Activated naive CD4-positive, alpha-beta T cell treated with anti-CD3 and anti-CD28 coated beads for 36 hours (primary cell): ENCODE measurements at regions of chr7 and their contacts with region 1.

Region 1: GRCh38 chr7:157432957-157433576 is 96.3 kb downstream of the DNAJB6 start:
- DNase-seq: peak; percentile 78
- H3K4me3 Mint-ChIP-seq: peak overlapping the region; percentile 34
- H3K27ac Mint-ChIP-seq: no peak overlapping the region
- H3K4me1 Mint-ChIP-seq: peaks cover 14% of the 10 kb centered on the region
- H3K27me3 Mint-ChIP-seq: no peaks in the 10 kb centered on the region

Region 2: GRCh38 chr7:157474689-157475088 is 41.6 kb after region 1 on chr7:
- CTCF ChIA-PET with region 1: no interaction called
- intact Hi-C with region 1: loop called (anchors 1 kb)
- DNase-seq: no peak
- H3K4me3 Mint-ChIP-seq: no peak overlapping the region
- H3K27ac Mint-ChIP-seq: no peak overlapping the region
- H3K4me1 Mint-ChIP-seq: peaks cover 52% of the 10 kb centered on the region
- H3K27me3 Mint-ChIP-seq: no peaks in the 10 kb centered on the region

Region 3: GRCh38 chr7:157485361-157485831 is 52.3 kb after region 1 on chr7:
- CTCF ChIA-PET with region 1: no interaction called
- intact Hi-C with region 1: no loop called
- DNase-seq: no peak
- H3K4me3 Mint-ChIP-seq: no peak overlapping the region
- H3K27ac Mint-ChIP-seq: no peak overlapping the region
- H3K4me1 Mint-ChIP-seq: peaks cover 12% of the 10 kb centered on the region
- H3K27me3 Mint-ChIP-seq: no peaks in the 10 kb centered on the region

Region 4: GRCh38 chr7:157585113-157585861 is 152.2 kb after region 1 on chr7:
- CTCF ChIA-PET with region 1: interaction called, 3 read pairs
- intact Hi-C with region 1: loop called (anchors 10 kb)
- DNase-seq: peak; percentile 20
- H3K4me3 Mint-ChIP-seq: peak overlapping the region; percentile 76
- H3K27ac Mint-ChIP-seq: no peak overlapping the region
- H3K4me1 Mint-ChIP-seq: peaks cover 16% of the 10 kb centered on the region
- H3K27me3 Mint-ChIP-seq: peaks cover 7% of the 10 kb centered on the region

Region 5: DNA sequence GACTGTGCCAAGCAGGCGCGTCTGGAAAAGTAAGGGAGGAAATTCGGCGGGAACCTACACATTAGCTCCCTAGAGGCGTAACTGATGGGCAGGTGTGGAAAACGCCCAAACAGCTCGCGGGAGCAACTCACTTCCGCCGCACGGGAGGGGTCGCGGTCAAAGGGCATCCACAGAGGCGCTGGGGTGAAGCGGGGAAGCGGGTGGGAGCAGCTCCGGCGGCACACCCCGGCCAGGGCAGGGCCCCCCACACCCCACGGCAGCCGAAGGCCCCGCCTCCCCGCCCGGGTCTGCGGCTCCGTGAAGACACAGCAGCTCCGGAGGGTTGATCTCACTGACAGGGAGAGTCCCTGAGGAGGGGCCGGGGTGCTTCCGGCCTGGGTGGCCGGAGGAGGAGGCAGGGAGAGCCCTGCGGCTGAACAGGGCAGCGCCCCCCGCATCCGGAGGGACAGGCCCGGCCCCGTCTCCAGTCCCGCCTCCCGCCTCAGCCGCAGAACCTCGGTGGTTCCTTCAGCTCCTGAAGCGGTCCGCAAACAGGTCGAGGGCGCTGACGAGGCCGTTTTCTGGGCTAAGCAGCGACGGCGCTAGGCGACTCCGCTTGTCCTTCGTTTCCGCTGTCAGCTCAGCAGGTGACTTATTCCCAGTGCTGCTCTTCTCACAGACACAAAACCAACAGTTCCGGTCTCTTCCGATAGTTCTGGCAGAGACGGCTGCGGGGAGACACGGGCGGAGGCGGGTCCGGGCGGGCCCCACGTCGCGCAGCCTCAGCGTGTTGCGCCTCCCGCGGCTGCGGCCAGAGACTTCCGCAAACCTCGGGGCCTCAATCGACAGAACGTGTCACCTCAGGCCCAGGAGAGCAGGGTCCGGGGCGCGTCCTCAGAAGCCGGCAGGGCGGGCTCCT is 179.8 kb after region 1 on chr7:
- CTCF ChIA-PET with region 1: interaction called, 7 read pairs
- intact Hi-C with region 1: loop called (anchors 2 kb)
- DNase-seq: peak; percentile 77
- H3K4me3 Mint-ChIP-seq: peak overlapping the region; percentile 77
- H3K27ac Mint-ChIP-seq: peak overlapping the region; percentile 46
- H3K4me1 Mint-ChIP-seq: peaks cover 10% of the 10 kb centered on the region
- H3K27me3 Mint-ChIP-seq: no peaks in the 10 kb centered on the region

Region 6: DNA sequence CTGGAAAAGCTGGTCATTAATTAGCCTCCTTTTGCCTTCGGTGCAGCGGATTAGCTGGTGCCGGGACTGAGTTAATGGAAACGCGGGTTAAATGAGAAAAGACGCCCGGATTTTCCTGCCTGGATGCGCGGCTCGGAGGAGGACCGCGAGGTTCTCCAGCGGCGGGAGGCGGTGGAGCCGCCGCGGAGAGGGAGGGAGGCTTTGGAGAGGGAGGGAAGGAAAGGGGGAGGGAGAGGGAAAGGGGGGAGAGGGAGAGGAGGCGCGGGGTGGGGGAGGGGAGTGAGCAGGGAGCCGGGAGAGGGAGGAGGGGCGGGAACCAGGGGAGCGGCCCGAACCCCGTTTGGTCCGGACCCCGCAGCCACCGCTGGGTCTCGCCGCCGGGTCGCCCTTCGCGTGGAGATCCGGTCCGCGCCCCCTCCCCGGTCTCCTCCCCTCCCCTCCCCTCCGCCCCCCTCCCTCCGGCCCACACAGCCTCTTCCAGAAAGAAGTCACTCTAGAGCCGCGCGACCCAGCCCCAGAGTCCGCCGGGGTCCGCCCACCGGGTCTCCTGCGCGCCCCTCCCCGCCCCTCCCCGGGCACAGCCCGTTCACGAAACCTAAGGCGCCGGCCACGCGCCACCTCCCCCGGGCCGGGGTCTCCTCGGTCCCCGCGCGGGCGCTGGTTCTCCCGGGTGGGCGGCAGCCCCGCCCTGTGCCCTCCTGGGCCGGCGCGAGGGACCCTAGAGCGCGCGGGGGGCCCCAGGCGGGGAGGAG is 251.3 kb after region 1 on chr7:
- CTCF ChIA-PET with region 1: no interaction called
- intact Hi-C with region 1: loop called (anchors 10 kb)
- DNase-seq: no peak
- H3K4me3 Mint-ChIP-seq: no peak overlapping the region
- H3K27ac Mint-ChIP-seq: no peak overlapping the region
- H3K4me1 Mint-ChIP-seq: peaks cover 28% of the 10 kb centered on the region
- H3K27me3 Mint-ChIP-seq: peaks cover 79% of the 10 kb centered on the region

Region 7: DNA sequence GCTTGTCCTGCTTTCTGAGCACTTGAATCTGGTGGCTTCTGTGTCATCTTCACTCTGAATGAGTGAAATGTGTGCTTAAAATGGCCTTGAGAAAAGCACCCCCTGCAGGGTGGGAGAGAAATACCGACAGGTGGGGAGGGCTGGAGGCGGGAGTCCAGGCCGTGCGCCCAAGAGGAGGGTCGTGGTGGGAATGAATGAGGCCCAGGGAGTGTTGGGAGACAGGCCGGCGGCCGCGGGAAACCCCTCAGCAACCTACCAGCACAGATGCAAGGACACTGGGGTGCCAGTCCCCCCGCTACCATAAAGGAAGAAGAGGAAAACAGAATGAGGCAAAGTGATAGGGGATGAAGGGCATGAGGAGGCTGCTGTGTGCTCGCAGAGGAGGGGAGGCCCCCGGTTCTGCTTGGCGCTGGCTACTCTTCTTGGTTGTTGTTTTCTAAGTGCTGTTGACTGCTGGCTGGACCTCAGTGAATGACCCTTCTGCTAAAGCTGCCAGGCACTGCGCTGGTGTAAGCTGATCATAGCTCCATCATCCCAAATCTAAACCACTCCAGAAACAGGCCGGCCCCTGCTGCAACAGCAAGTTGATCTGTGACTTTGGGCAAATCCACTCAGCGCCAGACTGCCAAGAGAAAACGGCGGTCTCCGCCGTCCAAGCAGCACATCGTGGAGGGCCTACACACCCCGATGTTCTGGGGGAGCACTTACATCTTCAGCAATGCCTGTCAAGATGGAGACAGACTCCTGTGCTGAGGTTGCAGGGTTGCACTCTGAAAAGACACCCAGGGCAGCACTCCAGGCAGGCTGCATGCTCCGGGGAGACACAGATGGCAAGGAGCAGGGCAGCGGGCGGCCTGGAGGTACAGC is 282.2 kb after region 1 on chr7:
- CTCF ChIA-PET with region 1: no interaction called
- intact Hi-C with region 1: loop called (anchors 1 kb)
- DNase-seq: no peak
- H3K4me3 Mint-ChIP-seq: no peak overlapping the region
- H3K27ac Mint-ChIP-seq: no peak overlapping the region
- H3K4me1 Mint-ChIP-seq: no peaks in the 10 kb centered on the region
- H3K27me3 Mint-ChIP-seq: no peaks in the 10 kb centered on the region

Region 8: DNA sequence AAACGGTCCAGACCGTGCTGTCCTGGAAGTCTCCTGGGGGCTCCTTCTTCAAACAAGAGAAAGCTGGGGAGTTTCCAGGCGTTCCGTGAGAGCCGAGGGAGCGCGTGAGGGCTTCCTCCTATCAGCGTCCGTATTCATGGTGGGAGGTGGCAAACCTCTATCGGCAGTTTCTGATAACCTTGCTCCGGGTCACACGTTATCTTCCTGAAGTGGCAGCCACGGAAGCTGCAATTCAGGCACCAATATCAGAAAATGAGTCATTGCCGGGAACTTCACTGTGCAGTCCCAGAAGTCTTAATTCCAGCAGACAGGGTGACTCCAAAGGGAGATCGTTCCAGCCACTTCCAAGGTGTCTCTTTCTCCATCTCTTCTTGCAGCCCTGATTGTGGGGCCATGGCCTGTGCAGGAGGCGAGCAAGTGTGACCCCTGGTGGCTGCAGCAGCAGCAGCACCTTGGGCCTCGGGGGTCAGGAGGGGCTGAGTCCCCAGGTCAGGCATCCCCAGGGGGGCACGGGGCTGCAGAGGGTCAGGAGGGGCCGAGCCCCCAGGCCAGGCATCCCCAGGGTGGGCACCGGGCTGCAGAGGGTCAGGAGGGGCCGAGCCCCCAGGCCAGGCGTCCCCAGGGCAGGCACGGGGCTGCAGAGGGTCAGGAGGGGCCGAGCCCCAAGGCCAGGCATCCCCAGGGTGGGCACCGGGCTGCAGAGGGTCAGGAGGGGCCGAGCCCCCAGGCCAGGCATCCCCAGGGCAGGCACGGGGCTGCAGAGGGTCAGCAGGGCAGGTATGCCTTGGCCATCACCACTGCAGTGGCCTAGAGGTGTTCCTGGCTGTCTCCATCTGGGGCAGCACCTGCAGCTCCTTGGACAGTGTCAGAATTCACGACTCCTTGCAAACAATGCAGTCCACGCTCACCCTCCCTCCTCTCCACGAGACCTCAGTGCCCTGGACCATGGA is 442.4 kb after region 1 on chr7:
- CTCF ChIA-PET with region 1: no interaction called
- intact Hi-C with region 1: loop called (anchors 1 kb)
- DNase-seq: peak; percentile 68
- H3K4me3 Mint-ChIP-seq: peak overlapping the region; percentile 60
- H3K27ac Mint-ChIP-seq: peak overlapping the region; percentile 21
- H3K4me1 Mint-ChIP-seq: peaks cover 41% of the 10 kb centered on the region
- H3K27me3 Mint-ChIP-seq: no peaks in the 10 kb centered on the region